ENCODE measurements at regions of chr6 and their contacts with region 1.

Region 1: DNA sequence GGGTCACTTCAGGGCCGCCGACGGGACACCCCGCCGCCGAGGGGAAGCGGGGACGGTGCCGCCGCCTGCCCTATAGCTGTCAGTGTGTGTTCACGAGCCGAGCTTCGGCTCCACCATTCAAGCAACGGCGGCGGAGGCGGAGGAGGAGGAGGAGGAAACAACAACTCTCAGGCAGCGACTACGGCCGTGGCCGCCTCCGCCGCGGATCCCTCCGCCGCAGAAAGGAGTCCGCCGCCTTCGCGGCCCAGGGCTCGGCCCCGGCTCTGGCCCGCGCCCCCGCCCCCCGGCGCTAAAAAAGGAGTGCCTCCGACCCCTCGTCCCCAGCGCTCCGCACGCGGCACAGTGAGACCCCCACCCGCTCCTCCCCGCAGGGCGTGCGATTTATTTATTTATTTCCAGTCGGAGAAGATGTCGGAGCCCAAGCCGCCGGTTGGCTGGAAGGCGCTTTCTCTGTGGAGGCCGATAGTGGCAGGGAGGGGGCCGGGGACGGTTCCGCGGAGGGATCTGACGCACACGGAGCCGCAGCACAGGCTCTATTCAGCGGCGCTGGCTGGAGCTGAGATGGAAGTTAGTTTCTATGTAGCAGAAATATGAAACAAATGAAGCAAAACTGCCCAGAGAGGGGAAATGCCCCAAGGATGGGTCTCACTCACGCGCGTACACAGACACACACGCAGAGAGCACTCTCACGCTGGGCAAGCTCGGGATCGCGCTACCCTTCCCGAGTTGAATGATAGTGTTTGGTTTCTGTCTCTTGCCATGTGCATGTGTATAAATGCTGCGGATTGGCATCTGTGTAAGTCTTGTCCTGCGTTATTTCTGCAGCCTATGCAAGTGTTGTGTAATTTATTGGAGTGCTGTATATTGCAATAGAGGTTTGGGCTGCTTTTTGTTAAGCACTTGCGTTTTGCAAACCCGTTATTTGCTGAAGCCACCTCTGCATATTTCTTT is at the start of gene PHIP:
- DNase-seq: peak; percentile 82
- ATAC-seq: peak; percentile 86
- H3K4me3 ChIP-seq: peak within 1 kb of the TSS; percentile 93
- H3K27ac ChIP-seq: peak within 1 kb of the TSS; percentile 97
- H3K4me1 ChIP-seq: 0 out of 2 replicates have a peak, but pooled peaks cover 3% of the 10 kb centered on the region
- H3K27me3 ChIP-seq: no peaks in the 10 kb centered on the region
- CTCF ChIP-seq: no peak
- EP300 ChIP-seq: no peak
- POLR2A ChIP-seq: peak; percentile 91
- RAD21 ChIP-seq: no peak
- polyA plus RNA-seq, gene PHIP: 8.5 to 9.8 TPM

Region 2: DNA sequence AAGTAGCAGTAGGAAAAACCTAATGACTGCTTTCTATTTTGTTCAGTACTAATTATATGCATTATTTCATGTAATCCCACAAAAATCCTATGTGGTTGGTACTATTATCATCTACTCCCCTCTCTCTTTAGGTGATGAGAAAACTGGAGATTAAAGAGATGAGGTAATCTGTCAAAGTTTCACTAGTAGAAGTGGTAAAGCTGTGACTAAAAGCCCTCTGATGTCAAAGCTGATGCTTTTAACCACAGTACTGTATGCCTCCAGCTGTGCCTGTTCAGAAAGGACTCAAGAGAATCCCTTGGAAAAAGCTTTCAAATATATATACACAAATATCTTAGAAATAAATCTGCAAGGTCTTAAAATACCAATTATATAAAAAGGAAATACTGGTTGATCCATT is 38.3 kb before region 1 on chr6:
- CTCF ChIA-PET with region 1: interaction called, 5 read pairs
- POLR2A ChIA-PET with region 1: interaction called, 8 read pairs
- RAD21 ChIA-PET with region 1: interaction called, 10 read pairs
- SMC1A ChIA-PET with region 1: interaction called, 5 read pairs
- in situ Hi-C with region 1: no loop called
- intact Hi-C with region 1: loop called (anchors 5 kb)
- DNase-seq: no peak
- ATAC-seq: peak; percentile 88
- H3K4me3 ChIP-seq: no peak overlapping the region
- H3K27ac ChIP-seq: no peak overlapping the region
- H3K4me1 ChIP-seq: peaks cover 12% of the 10 kb centered on the region; the same call in 1 of the 2 replicates
- H3K27me3 ChIP-seq: no peaks in the 10 kb centered on the region
- CTCF ChIP-seq: no peak
- EP300 ChIP-seq: peak in 1 of 2 experiments; percentile 20; a peak in 1 of 4 replicates
- POLR2A ChIP-seq: no peak
- RAD21 ChIP-seq: no peak

Region 3: GRCh38 chr6:79233611-79234149 is 155.3 kb after region 1 on chr6:
- CTCF ChIA-PET with region 1: interaction called, 5 read pairs
- POLR2A ChIA-PET with region 1: interaction called, 9 read pairs
- RAD21 ChIA-PET with region 1: interaction called, 5 read pairs
- SMC1A ChIA-PET with region 1: interaction called, 8 read pairs
- in situ Hi-C with region 1: no loop called
- intact Hi-C with region 1: loop called (anchors 1 kb)
- DNase-seq: peak; percentile 51
- ATAC-seq: peak; percentile 87
- H3K4me3 ChIP-seq: peak overlapping the region; percentile 79
- H3K27ac ChIP-seq: peak overlapping the region; percentile 95
- H3K4me1 ChIP-seq: 0 out of 2 replicates have a peak, but pooled peaks cover 5% of the 10 kb centered on the region
- H3K27me3 ChIP-seq: no peaks in the 10 kb centered on the region
- CTCF ChIP-seq: peak in 1 of 3 experiments; percentile 48; a peak in 2 of 6 replicates
- EP300 ChIP-seq: no peak
- POLR2A ChIP-seq: peak; percentile 88
- RAD21 ChIP-seq: no peak

Region 4: GRCh38 chr6:79335133-79335674 is 256.9 kb after region 1 on chr6:
- CTCF ChIA-PET with region 1: no interaction called
- POLR2A ChIA-PET with region 1: interaction called, 3 read pairs
- RAD21 ChIA-PET with region 1: interaction called, 4 read pairs
- SMC1A ChIA-PET with region 1: no interaction called
- in situ Hi-C with region 1: no loop called
- intact Hi-C with region 1: loop called (anchors 1 kb)
- DNase-seq: peak; percentile 85
- ATAC-seq: peak; percentile 94
- H3K4me3 ChIP-seq: no peak overlapping the region
- H3K27ac ChIP-seq: peak overlapping the region; percentile 38
- H3K4me1 ChIP-seq: peaks cover 6% of the 10 kb centered on the region; the same call in 1 of the 2 replicates
- H3K27me3 ChIP-seq: no peaks in the 10 kb centered on the region
- CTCF ChIP-seq: no peak
- EP300 ChIP-seq: peak; percentile 67 to 84
- POLR2A ChIP-seq: no peak
- RAD21 ChIP-seq: peak; percentile 18; the same call in 1 of the 2 replicates

Region 5: GRCh38 chr6:79536954-79537747 is 458.8 kb after region 1 on chr6 and contains the start of gene LCA5:
- CTCF ChIA-PET with region 1: no interaction called
- POLR2A ChIA-PET with region 1: no interaction called
- RAD21 ChIA-PET with region 1: no interaction called
- SMC1A ChIA-PET with region 1: no interaction called
- in situ Hi-C with region 1: no loop called
- intact Hi-C with region 1: loop called (anchors 2 kb)
- DNase-seq: peak; percentile 84
- ATAC-seq: peak; percentile 100
- H3K4me3 ChIP-seq: peak within 1 kb of the TSS; percentile 94
- H3K27ac ChIP-seq: peak within 1 kb of the TSS; percentile 66
- H3K4me1 ChIP-seq: no peaks in the 10 kb centered on the region
- H3K27me3 ChIP-seq: no peaks in the 10 kb centered on the region
- CTCF ChIP-seq: no peak
- EP300 ChIP-seq: no peak
- POLR2A ChIP-seq: peak; percentile 83
- RAD21 ChIP-seq: no peak
- polyA plus RNA-seq, gene LCA5: 0.13 to 0.32 TPM

Measured in GM12878 (cell line).